ENCODE measurements at regions of chr15 and their contacts with region 1.

Region 1: GRCh38 chr15:82656641-82657266 is 9.6 kb upstream of the CPEB1 start:
- DNase-seq: no peak
- ATAC-seq: no peak
- H3K4me3 ChIP-seq: no peak overlapping the region
- H3K27ac ChIP-seq: no peak overlapping the region
- H3K4me1 ChIP-seq: no peaks in the 10 kb centered on the region
- H3K27me3 ChIP-seq: peaks cover 0 to 18% (median 0%) of the 10 kb centered on the region in 3 donors
- CTCF ChIP-seq: no peak

Region 2: GRCh38 chr15:82139823-82140268 is 516.9 kb before region 1 on chr15:
- intact Hi-C with region 1: no loop called
- DNase-seq: no peak
- ATAC-seq: peak in 3 of 4 donors; percentile 8 to 71 (median 47)
- H3K4me3 ChIP-seq: no peak overlapping the region
- H3K27ac ChIP-seq: no peak overlapping the region
- H3K4me1 ChIP-seq: no peaks in the 10 kb centered on the region
- H3K27me3 ChIP-seq: no peaks in the 10 kb centered on the region
- CTCF ChIP-seq: peak; percentile 67

Region 3: DNA sequence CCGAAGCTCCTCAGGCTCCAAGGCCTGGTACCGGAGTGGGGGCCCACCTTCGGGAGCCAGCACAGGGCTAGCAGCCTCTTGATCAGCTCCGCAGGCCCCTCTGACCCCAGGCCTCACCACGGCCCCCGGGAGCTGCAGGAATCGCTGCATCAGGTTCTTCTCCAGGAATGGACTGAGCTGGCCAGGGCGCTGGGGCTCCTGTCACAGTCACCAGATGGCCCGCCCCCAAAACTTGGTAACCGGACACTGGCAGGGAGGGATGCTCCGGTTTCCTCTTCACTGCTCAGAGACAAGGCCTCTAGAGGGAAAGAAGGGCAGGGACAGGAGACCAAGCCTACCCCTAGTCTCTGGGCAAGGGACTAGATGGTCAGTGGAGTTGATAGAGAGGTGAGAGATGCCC is 43.0 kb after region 1 on chr15:
- intact Hi-C with region 1: loop called in 1 of 2 experiments (anchors 5 kb)
- DNase-seq: no peak
- ATAC-seq: no peak
- H3K4me3 ChIP-seq: no peak overlapping the region
- H3K27ac ChIP-seq: no peak overlapping the region
- H3K4me1 ChIP-seq: no peaks in the 10 kb centered on the region
- H3K27me3 ChIP-seq: no peaks in the 10 kb centered on the region
- CTCF ChIP-seq: no peak

Measured in psoas muscle (tissue), 8 donors.